CD4-positive, alpha-beta T cell (primary cell): ENCODE measurements at regions of chr7 and their contacts with region 1.

Region 1: DNA sequence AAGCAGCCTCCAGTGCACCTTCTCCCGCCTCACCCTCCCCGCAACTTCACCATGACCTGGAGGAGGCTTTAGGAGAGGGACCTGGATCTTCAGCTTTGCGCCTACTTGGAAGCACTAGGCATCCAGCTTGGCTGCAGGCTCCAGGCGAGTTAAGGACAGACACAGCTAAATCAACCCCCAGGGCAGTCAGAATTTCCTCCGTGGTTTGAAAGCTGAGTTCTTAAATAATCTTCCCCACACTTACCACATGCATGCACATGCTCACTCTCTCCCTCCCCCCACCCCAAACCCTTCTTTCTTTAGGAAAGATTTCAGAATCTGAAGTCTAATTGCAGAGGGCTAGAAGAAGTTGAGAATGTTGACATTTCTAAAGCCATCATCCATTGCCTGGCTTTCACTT is 36.7 kb upstream of the LRRC4 start:
- DNase-seq: no peak
- ATAC-seq: no peak
- H3K4me3 ChIP-seq: no peak overlapping the region
- H3K4me3 Mint-ChIP-seq: peak overlapping the region; percentile 25
- H3K27ac ChIP-seq: no peak overlapping the region
- H3K27ac Mint-ChIP-seq: no peak overlapping the region
- H3K4me1 ChIP-seq: peaks cover 20% of the 10 kb centered on the region
- H3K4me1 Mint-ChIP-seq: peaks cover 64% of the 10 kb centered on the region
- H3K27me3 ChIP-seq: no peaks in the 10 kb centered on the region
- H3K27me3 Mint-ChIP-seq: no peaks in the 10 kb centered on the region
- CTCF ChIP-seq: no peak

Region 2: GRCh38 chr7:128020159-128020558 is 47.8 kb before region 1 on chr7:
- CTCF ChIA-PET with region 1: no interaction called
- POLR2A ChIA-PET with region 1: no interaction called
- intact Hi-C with region 1: no loop called
- DNase-seq: peak in 4 of 14 experiments; percentile 16 to 46 (median 28)
- ATAC-seq: no peak
- H3K4me3 ChIP-seq: no peak overlapping the region
- H3K4me3 Mint-ChIP-seq: no peak overlapping the region
- H3K27ac ChIP-seq: no peak overlapping the region
- H3K27ac Mint-ChIP-seq: no peak overlapping the region
- H3K4me1 ChIP-seq: no peaks in the 10 kb centered on the region
- H3K4me1 Mint-ChIP-seq: no peaks in the 10 kb centered on the region
- H3K27me3 ChIP-seq: no peaks in the 10 kb centered on the region
- H3K27me3 Mint-ChIP-seq: no peaks in the 10 kb centered on the region
- CTCF ChIP-seq: no peak

Region 3: GRCh38 chr7:128056901-128057300 is 11.1 kb before region 1 on chr7:
- CTCF ChIA-PET with region 1: no interaction called
- POLR2A ChIA-PET with region 1: interaction called, 12 read pairs
- intact Hi-C with region 1: no loop called
- DNase-seq: no peak
- ATAC-seq: no peak
- H3K4me3 ChIP-seq: no peak overlapping the region
- H3K4me3 Mint-ChIP-seq: no peak overlapping the region
- H3K27ac ChIP-seq: no peak overlapping the region
- H3K27ac Mint-ChIP-seq: no peak overlapping the region
- H3K4me1 ChIP-seq: peaks cover 46% of the 10 kb centered on the region
- H3K4me1 Mint-ChIP-seq: peaks cover 79% of the 10 kb centered on the region
- H3K27me3 ChIP-seq: no peaks in the 10 kb centered on the region
- H3K27me3 Mint-ChIP-seq: no peaks in the 10 kb centered on the region
- CTCF ChIP-seq: no peak